Activated T-helper 1 cell treated with anti-CD3 and anti-CD28 coated beads, Interleukin-12 subunit alpha, Interleukin-12 subunit beta, Interleukin-2, Interleukin-4 antibody, amounts not matched to agents 30 ng/mL and 10 ng/mL and 1 ng/mL, durations not matched to agents 14 hours and 24 hours and 36 hours (primary cell): ENCODE measurements at regions of chr11 and their contacts with region 1.

Region 1: DNA sequence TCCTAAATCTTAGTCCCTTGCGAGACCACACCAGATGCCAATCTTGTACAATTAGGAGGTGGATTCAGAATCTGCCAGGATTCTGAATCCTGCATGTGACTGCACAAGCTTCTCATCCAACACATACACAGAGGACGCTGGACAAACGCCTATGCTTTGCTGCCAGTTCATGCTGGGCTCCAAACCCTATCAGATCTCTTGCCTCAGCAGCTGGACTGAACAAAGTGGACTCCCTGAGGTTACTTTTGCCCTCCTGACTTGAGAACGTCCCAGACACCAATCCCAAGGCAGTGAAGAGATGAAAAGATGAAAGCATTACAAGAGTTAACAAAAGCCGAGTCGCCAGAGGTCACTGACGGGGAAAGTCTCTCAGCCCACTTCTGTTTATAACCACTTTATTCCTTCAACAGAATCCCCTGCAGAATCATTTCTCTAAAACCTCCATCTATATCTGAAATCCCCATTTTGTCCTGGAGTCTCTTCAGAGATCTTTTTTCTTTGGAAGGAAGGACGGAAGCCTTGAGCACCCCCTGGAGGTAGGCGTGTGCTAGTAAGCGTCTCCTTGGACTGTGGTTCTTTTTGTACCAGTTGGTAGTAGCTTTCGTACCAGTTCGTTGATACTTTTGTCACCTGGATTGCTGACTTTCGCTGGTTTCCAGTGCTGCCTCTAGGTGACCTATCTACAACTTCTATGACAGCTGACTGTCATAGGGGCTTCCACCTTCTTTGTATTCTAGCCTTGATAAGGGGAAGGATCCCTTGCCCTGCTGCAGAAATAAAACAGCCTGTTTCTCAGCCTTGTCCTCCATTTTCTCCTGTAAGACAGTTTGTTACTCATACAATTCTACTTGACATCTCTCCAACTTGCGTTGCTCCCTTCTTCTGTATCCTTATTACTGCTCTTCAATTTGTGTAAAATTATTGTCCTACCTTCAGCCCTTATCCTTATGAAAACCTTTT is 26.1 kb upstream of the EED start:
- DNase-seq: peak; percentile 42
- H3K4me3 Mint-ChIP-seq: peak overlapping the region; percentile 40
- H3K27ac Mint-ChIP-seq: peak overlapping the region; percentile 81
- H3K4me1 Mint-ChIP-seq: peaks cover 81% of the 10 kb centered on the region
- H3K27me3 Mint-ChIP-seq: no peaks in the 10 kb centered on the region

Region 2: GRCh38 chr11:85682330-85683305 is 535.8 kb before region 1 on chr11:
- intact Hi-C with region 1: no loop called
- DNase-seq: peak; percentile 35
- H3K4me3 Mint-ChIP-seq: peak overlapping the region; percentile 83
- H3K27ac Mint-ChIP-seq: peak overlapping the region; percentile 78
- H3K4me1 Mint-ChIP-seq: peaks cover 16% of the 10 kb centered on the region
- H3K27me3 Mint-ChIP-seq: peaks cover 4% of the 10 kb centered on the region

Region 3: GRCh38 chr11:85752890-85753581 is 465.4 kb before region 1 on chr11:
- intact Hi-C with region 1: loop called (anchors 2 kb)
- DNase-seq: peak; percentile 89
- H3K4me3 Mint-ChIP-seq: peak overlapping the region; percentile 73
- H3K27ac Mint-ChIP-seq: peak overlapping the region; percentile 98
- H3K4me1 Mint-ChIP-seq: peaks cover 99% of the 10 kb centered on the region
- H3K27me3 Mint-ChIP-seq: peaks cover 4% of the 10 kb centered on the region

Region 4: DNA sequence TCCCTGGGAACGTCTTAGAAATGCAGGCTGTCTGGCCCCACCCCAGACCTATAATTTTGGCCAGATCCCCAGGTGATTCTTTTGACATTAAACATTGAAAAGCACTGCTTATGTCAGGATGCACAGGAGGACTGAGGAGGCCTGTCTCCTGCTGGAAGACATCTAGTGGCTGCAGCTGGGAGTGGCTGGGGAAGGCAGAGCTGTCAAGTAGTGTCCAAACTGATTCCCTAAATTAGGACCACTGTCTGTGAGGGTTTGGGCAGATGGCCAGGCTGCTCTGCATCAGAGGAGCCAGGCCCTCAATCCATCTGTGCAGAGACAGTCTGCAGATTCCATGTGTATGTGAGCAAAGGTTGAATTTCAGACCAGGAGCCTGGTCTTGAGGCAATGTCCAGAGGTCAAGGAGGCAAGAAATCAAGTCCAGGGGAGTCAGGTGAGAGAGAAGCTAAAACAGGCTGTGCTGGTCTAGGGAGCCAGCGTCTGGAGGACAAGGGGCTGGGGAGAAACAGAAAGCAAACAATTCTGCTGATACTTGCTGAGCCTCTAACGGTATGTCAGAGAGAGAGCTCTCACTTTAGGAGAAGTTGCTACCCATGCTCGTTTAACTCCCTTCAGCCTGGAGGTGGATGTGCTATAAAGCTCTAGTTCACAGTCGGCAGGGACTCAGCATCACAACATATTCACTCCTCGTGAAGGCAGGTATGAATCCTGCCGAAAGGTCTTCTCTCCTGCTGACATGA is 392.1 kb before region 1 on chr11:
- intact Hi-C with region 1: loop called (anchors 5 kb)
- DNase-seq: no peak
- H3K4me3 Mint-ChIP-seq: peak overlapping the region; percentile 1
- H3K27ac Mint-ChIP-seq: peak overlapping the region; percentile 87
- H3K4me1 Mint-ChIP-seq: peaks cover 74% of the 10 kb centered on the region
- H3K27me3 Mint-ChIP-seq: no peaks in the 10 kb centered on the region

Region 5: GRCh38 chr11:86047275-86047991 is 171.0 kb before region 1 on chr11:
- intact Hi-C with region 1: loop called (anchors 1 kb)
- DNase-seq: no peak
- H3K4me3 Mint-ChIP-seq: peak overlapping the region; percentile 69
- H3K27ac Mint-ChIP-seq: peak overlapping the region; percentile 91
- H3K4me1 Mint-ChIP-seq: peaks cover 88% of the 10 kb centered on the region
- H3K27me3 Mint-ChIP-seq: no peaks in the 10 kb centered on the region

Region 6: GRCh38 chr11:86174101-86175046 is 44.0 kb before region 1 on chr11:
- intact Hi-C with region 1: loop called (anchors 1 kb)
- DNase-seq: no peak
- H3K4me3 Mint-ChIP-seq: no peak overlapping the region
- H3K27ac Mint-ChIP-seq: no peak overlapping the region
- H3K4me1 Mint-ChIP-seq: peaks cover 33% of the 10 kb centered on the region
- H3K27me3 Mint-ChIP-seq: no peaks in the 10 kb centered on the region

Region 7: GRCh38 chr11:86230921-86231430 is 12.6 kb after region 1 on chr11:
- intact Hi-C with region 1: loop called (anchors 1 kb)
- DNase-seq: no peak
- H3K4me3 Mint-ChIP-seq: no peak overlapping the region
- H3K27ac Mint-ChIP-seq: peak overlapping the region; percentile 47
- H3K4me1 Mint-ChIP-seq: peaks cover 68% of the 10 kb centered on the region
- H3K27me3 Mint-ChIP-seq: no peaks in the 10 kb centered on the region

Region 8: DNA sequence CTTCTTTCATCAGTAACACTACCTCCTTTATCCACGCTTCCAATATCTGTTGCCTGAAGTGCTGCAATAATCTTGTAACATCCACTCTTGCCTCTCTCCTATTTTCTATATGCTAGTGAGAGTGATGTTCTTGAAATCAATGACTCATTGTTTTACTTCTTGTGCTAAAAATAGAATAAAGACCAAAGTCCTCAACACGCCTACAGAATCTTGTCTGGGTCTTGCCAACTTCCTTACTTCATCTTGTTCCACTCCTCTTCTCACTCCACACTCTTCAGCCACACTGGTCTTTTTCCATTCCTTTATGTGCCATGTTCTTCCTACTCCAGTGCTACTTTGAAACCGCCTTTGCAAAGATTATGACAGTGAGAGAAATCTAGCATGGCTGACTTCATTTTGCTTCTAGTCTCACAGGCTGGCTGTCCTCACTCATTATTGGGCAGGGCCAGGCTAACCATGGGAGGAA is 292.7 kb after region 1 on chr11:
- intact Hi-C with region 1: loop called (anchors 2 kb)
- DNase-seq: no peak
- H3K4me3 Mint-ChIP-seq: no peak overlapping the region
- H3K27ac Mint-ChIP-seq: no peak overlapping the region
- H3K4me1 Mint-ChIP-seq: no peaks in the 10 kb centered on the region
- H3K27me3 Mint-ChIP-seq: no peaks in the 10 kb centered on the region